Pancreas (tissue), 10 donors: ENCODE measurements at regions of chr11 and their contacts with region 1.

Region 1: DNA sequence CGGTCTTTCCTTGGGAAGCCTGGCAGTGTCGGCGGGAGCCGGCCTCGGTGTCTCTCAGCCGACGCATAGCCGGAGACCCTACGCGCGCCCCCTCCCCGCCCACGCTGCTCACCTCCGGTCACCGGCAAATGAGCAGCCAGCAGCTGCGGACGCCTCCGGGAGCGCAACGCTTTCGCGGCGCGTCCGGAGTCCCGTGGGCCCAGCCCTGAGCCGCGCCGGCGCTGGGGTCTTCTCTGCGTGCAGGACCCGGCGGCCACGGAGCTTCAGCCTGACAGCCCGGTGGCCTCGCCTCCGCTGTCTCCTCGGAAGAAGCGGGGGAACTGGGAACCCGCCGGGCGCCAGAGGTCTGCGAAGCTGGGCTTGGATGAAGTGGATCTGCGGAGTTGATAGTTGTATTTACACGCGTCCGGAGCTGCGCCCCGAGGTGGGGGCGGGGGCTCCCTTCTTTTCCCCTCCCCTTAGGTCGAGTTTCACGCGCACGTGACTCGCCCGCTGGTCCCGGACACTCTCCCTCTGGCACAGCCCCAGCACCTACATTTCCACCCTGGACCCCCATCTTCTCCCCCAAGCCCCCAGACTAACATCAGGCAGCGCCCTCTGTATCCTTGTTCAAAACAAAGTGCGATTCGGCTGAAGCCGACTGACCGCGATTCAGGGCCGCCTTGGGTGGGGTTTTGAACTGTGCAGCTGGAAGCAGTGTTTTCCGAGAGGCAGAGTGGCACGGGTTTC is at the start of gene SLC43A1:
- DNase-seq: peak; percentile 78 to 90 (median 80)
- ATAC-seq: peak; percentile 73 to 81 (median 74)
- H3K4me3 ChIP-seq: peak within 1 kb of the TSS; percentile 76 to 96 (median 88)
- H3K27ac ChIP-seq: peak within 1 kb of the TSS; percentile 71 to 89 (median 80)
- H3K4me1 ChIP-seq: peaks cover 0 to 3% (median 0%) of the 10 kb centered on the region in 3 donors
- H3K27me3 ChIP-seq: no peaks in the 10 kb centered on the region
- CTCF ChIP-seq: no peak
- total RNA-seq, gene SLC43A1: 78.3 to 280 (median 137) TPM

Region 2: DNA sequence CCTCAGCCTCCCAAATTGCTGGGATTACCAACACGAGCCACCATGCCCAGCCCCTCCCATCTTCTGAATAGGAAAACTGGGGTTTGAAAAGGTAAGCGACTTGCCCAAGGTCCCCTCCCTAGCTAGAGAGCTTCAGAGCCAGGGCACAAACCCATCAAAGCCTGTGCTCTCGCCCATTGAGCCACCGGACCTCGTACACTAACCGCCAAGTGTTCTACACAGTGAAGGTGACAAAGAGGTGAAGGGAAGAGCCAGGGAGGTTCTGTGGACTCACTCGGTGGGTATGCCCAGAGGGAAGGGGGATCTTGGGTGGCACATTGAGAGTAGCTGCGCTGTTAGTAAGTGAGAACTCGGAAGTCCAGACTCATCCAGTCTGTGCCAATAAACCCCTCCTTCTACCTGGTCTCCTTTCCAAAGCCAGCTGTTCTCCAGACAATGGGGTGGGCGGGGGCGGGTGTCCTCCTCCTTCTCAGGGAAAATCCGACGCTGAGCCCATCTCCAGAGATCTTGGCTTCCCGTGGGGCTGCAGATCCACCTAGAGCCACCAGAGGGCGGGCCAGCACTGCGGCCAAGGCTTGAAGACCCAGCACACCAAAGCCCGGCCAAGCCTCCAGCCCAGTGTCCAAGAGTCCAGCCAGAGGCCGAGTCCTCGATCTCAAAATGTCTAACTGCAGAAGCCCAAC is 58.4 kb before region 1 on chr11:
- intact Hi-C with region 1: loop called in 1 of 3 experiments (anchors 10 kb)
- DNase-seq: peak; percentile 74 to 95 (median 88)
- ATAC-seq: peak; percentile 67 to 91 (median 79)
- H3K4me3 ChIP-seq: no peak overlapping the region
- H3K27ac ChIP-seq: no peak overlapping the region
- H3K4me1 ChIP-seq: peaks cover 4 to 24% (median 17%) of the 10 kb centered on the region in 3 donors
- H3K27me3 ChIP-seq: no peaks in the 10 kb centered on the region
- CTCF ChIP-seq: peak; percentile 94 to 98 (median 96)